AG04450 (cell line): ENCODE measurements at regions of chr1 and their contacts with region 1.

Region 1: DNA sequence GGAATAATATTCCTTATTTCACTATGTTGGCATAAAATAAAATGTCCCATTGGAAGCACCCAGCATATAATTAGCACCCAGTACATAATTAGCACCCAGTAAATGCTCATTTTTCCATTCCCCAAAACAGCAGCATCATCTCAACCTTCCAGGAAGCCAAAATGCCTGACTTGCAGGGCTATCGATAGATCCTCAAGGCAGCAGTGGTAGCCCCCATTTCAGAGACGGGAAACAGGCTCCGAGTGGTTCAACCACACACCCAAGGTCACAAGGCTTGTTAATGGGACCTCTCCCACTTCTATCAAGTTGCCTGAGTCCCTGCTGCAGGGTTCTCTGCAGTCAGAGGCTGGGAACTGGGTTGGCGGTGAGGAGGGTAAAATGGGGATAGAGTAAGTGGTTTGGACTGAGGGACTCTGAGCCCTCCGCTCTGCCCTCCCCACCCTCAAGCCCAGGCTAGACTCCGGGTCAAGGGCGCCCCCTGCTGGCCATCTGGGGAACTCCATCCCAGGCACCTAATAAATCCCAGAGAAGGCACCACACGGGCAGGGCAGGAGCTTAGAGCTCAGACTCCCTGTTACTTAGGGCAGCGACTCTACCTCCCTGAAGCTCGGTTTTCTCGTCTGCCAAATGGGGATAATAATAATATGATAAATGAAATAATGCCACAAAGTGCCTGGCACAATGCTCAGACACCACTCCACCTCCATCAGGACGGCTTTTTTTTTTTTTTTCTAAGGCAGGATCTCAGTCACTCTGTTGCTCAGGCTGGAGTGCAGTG is 21.9 kb upstream of the LAPTM5 start:
- DNase-seq: no peak
- H3K4me3 ChIP-seq: no peak overlapping the region
- H3K27ac ChIP-seq: no peak overlapping the region
- H3K27me3 ChIP-seq: peaks cover 3% of the 10 kb centered on the region
- CTCF ChIP-seq: peak; percentile 89

Region 2: DNA sequence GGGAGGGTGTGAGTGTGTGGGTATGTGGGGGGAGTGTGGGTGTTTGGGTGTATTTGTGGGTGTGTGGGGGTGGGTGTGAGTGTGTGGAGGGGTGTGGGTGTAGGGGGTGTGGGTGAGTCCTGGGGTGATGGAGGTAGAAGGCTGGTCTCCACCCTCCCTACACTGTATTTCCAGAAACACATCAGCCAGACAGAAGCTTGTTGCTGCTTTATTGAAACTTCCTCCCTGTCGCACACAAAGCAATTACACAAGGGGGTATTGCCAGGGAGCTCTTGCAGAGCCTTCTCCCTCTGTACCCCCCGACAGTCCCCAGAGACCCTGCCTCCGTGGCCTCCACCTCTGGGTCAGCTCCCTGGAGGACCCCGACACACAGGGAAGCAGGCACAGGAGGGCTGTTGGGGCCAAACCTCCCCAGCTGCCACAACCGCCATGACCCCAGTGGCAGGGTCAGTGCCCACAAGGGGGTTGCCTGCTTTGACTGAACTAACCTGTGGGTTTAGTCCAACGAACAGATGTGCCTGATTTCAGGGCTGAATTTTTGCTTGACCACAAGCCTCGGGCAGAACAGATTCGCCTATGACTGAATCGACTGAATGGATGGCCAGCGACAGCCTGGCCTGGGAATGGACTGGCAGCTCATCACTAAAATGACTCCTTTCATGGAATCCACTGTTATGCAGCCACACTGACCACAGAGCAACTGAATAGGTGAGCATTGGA is 47.0 kb before region 1 on chr1:
- CTCF ChIA-PET with region 1: interaction called, 516 read pairs
- POLR2A ChIA-PET with region 1: no interaction called
- DNase-seq: no peak
- H3K4me3 ChIP-seq: no peak overlapping the region
- H3K27ac ChIP-seq: no peak overlapping the region
- H3K27me3 ChIP-seq: peaks cover 2% of the 10 kb centered on the region
- CTCF ChIP-seq: no peak

Region 3: DNA sequence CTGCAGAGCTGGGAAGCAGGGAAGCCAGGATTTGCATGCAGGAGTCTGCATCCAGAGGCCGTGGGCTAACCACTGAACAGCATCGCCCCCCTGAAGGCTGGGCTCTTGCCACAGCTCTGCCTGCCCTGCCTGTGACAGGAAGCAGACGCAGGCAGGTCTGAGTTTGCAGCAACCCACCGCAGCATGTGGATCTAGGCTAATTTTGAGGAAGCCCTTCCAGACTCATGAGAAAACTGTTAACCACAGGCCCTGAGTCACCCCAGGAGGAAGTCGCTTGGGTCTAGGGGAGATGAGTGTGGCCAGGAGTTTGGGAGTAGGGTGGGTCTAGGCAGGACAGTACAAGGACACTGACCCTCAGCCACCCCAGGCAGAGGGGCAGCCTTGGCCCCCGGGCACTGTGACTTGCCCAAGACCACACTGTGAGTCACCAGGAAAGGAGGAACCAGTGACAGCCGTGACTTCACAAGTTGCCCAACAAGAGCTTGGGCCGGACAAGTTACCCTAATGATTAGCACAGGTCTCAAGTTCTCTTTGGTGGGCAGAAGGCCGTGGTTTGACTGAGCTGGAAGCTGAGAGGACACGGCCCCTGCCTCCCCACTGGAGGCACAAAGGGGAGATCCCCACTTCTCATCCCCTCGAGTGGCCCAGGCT is 22.8 kb before region 1 on chr1:
- CTCF ChIA-PET with region 1: interaction called, 31 read pairs
- POLR2A ChIA-PET with region 1: no interaction called
- DNase-seq: no peak
- H3K4me3 ChIP-seq: no peak overlapping the region
- H3K27ac ChIP-seq: peak overlapping the region; percentile 57
- H3K27me3 ChIP-seq: peaks cover 24% of the 10 kb centered on the region
- CTCF ChIP-seq: no peak

Region 4: DNA sequence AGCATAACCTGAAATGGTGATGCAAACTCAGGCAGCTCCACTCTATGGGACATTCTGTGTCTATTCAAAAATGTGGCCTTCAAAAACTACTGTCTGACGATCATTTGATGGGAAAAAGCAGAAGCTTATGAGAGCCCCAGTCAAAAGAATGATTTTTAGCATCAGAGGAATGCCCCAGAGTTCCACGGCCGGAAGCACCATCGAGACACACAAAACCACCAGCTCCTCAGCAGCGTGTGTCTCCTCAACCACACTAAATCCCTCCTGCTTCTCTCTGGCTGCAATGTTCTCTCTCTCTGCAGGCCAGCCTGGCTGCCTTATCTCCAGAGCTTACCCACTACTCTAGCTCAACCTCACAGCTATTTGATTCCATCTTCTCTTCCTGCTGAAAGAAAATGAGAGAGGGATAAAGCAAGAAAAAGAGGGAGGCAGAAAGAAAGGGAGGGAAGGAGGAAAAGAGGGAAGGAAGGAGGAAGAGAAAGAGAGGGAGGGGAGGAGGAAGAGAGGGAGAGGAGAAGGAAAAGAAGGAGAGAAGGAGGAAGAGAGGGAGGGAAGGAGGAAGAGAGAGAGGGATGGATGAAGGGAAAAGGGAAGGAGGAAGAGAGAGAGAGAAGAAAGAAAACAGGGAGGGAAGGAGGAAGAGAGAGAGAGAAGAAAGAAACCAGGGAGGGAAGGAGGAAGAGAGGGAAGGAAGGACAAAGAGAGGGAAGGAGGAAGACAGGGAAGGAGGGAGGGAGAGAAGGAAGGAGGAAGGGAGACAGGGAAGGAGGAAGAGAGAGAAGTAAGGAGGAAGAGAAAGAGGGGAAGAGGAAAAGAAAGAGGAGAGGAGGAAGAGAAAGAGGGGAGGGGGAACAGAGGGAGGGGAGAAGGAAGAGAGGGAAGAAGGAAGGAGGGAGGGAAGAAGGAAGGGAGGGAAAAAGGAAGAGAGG is 11.6 kb after region 1 on chr1:
- CTCF ChIA-PET with region 1: interaction called, 20 read pairs
- POLR2A ChIA-PET with region 1: interaction called, 5 read pairs
- DNase-seq: no peak
- H3K4me3 ChIP-seq: no peak overlapping the region
- H3K27ac ChIP-seq: no peak overlapping the region
- H3K27me3 ChIP-seq: peaks cover 9% of the 10 kb centered on the region
- CTCF ChIP-seq: no peak

Region 5: GRCh38 chr1:30919025-30919881 is 139.8 kb after region 1 on chr1:
- CTCF ChIA-PET with region 1: interaction called, 257 read pairs
- POLR2A ChIA-PET with region 1: no interaction called
- DNase-seq: peak; percentile 55
- H3K4me3 ChIP-seq: no peak overlapping the region
- H3K27ac ChIP-seq: no peak overlapping the region
- H3K27me3 ChIP-seq: no peaks in the 10 kb centered on the region
- CTCF ChIP-seq: peak; percentile 31; the same call in 1 of the 2 replicates